ENCODE measurements at regions of chr13 and their contacts with region 1.

Region 1: DNA sequence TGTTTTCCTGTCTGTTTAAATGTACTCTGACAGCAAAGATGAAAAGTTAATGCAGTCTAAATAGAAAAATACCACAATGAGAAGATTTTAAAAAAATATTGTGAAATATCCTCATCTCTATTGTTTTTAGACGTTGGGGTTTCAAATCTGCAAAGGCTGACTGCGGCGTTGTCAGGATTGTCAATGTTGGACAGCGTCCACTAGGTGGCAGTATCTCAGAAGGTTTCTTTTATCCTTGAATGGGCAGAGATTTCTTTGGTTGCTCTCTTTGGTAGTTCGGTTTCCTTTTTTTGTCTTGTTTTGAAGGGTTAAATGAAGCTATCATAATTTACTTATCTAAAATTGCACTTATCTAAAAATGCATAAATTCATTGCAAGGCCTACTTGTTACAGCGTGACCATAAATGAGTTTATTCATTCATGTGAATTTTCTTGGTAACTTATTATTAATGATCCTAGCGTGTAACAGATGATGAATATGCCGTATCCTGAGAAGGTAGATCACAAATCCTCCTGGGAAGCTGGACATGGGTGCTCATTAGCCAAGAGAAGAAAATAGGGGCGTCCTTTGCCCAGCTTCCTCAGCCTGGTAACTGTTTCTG is 21.1 kb downstream of the TNFSF11 start:
- DNase-seq: peak in 2 of 3 donors; percentile 39 to 59
- ATAC-seq: peak; percentile 50 to 68
- H3K4me3 ChIP-seq: no peak overlapping the region
- H3K27ac ChIP-seq: no peak overlapping the region
- H3K4me1 ChIP-seq: no peaks in the 10 kb centered on the region
- H3K27me3 ChIP-seq: no peaks in the 10 kb centered on the region

Region 2: DNA sequence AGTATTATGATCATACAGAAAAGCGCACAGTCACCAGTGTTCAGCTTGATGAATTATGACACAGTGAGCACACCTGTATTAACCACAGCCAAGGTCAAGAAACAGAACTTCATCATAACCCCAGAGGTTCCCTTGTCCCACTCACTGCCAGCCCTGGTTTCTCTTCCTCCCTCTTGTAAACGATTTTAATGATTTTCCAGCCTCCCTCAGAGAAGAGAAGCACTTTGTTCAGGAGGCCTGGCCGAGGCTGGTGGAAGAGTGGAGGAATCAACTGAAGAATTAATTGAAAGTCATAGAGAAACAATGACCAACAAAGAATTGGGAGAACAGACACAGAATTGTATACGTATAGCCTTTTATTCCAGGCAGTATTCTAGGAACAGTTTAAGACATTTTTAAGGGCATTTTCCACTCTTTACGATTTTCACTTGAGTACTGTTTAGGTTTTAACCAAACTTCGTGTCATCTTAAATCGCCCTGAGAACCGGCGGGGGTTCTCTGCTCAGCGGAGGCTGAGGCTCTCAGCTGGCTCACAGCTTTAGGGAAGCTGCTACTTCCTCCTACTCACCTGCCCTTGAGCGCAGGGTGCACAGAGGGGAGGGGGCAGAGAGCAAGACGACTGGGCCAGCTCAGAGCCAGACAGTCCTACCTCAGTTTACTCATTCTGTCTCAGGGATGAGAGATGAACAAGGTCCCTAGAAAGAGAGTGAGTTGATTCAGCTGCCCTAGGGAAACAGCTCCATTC is 214.5 kb before region 1 on chr13:
- intact Hi-C with region 1: no loop called
- DNase-seq: no peak
- ATAC-seq: no peak
- H3K4me3 ChIP-seq: no peak overlapping the region
- H3K27ac ChIP-seq: no peak overlapping the region
- H3K4me1 ChIP-seq: no peaks in the 10 kb centered on the region
- H3K27me3 ChIP-seq: no peaks in the 10 kb centered on the region

Region 3: GRCh38 chr13:43878892-43879754 is 1284.1 kb after region 1 on chr13 and contains the start of gene CCDC122:
- intact Hi-C with region 1: loop called in 1 of 4 experiments (anchors 10 kb)
- DNase-seq: peak; percentile 88 to 94 (median 94)
- ATAC-seq: peak; percentile 93 to 95
- H3K4me3 ChIP-seq: peak within 1 kb of the TSS; percentile 76
- H3K27ac ChIP-seq: peak within 1 kb of the TSS; percentile 95
- H3K4me1 ChIP-seq: peaks cover 2% of the 10 kb centered on the region
- H3K27me3 ChIP-seq: no peaks in the 10 kb centered on the region
- total RNA-seq, gene CCDC122: 4.6 to 15.6 (median 10.1) TPM

Measured in right cardiac atrium (tissue), 5 donors.